AG04450 (cell line): ENCODE measurements at regions of chr7 and their contacts with region 1.

Region 1: DNA sequence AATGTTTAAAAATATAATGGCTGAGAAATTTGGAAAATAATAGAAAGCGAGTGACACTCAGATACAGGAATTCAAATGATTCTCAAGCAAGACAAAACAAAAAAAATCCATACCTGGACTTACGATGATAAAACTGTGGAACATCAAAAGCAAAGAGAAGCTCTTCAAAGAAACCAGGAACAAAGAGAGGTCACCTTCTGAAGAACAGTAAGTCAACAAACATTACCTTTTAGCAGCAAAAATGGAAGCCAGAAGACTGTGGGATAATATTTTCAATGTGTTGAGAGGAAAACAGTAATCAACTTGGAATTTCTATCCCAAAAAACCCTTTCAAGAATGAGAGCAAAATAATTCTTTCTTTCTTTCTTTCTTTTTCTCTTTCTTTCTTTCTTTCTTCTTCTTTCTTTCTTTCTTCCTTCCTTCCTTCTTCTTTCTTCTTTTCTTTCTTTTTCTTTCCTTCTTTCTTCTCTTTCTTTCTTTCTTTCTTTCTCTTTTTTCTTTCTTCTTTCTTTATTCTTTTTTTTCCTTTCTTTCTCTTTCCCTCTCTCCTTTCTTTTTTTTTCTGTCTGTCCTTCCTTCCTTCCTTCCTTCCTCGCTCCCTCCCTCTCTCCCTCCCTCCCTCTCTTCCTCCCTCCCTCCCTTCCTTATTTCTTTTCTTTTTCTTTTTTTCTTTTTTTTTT is 1.8 kb upstream of the CPA5 start:
- DNase-seq: no peak
- H3K4me3 ChIP-seq: no peak overlapping the region
- H3K27ac ChIP-seq: no peak overlapping the region
- H3K27me3 ChIP-seq: no peaks in the 10 kb centered on the region
- CTCF ChIP-seq: no peak

Region 2: DNA sequence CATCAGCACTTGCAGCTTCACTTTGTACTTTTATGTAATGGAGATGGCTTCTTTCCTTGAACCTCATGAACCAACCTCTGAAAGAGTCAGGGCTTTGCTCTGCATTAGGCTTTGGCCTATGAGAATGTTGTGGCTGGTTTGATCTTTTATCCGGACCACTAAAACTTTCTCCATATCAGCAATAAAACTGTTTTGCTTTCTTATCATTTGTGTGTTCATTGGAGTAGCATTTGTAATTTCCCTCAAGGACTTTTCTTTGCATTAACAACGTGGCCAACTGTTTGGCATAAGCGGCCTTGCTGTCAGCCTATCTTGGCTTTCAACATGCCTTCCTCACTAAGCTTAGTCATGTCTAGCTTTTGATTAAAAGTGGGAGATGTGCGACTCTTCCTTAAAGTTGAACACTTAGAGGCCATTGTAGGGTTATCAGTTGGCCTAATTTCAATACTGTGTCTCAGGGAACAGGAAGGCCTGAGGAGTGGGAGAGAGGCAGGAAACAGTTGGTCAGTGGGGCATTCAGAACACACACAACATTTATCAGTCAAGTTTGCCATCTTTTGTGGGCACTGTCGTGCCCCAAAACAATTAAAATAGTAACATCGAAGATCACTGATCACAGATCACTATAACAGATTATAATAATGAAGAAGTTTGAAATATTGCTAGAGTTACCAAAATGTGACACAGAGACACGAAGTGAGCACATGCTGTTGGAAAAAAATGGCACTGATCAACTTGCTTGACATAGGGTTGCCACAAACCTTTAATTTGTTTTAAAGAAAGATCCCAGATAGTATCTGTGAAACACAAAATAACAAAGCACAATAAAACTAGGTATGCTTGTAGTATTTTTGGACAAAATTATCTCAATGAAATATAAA is 666.6 kb before region 1 on chr7:
- CTCF ChIA-PET with region 1: no interaction called
- POLR2A ChIA-PET with region 1: no interaction called
- DNase-seq: no peak
- H3K4me3 ChIP-seq: no peak overlapping the region
- H3K27ac ChIP-seq: no peak overlapping the region
- H3K27me3 ChIP-seq: no peaks in the 10 kb centered on the region
- CTCF ChIP-seq: no peak

Region 3: GRCh38 chr7:130356121-130356875 is 13.5 kb after region 1 on chr7:
- CTCF ChIA-PET with region 1: no interaction called
- POLR2A ChIA-PET with region 1: no interaction called
- DNase-seq: peak; percentile 95
- H3K4me3 ChIP-seq: peak overlapping the region; percentile 18; the same call in 1 of the 2 replicates
- H3K27ac ChIP-seq: peak overlapping the region; percentile 100
- H3K27me3 ChIP-seq: no peaks in the 10 kb centered on the region
- CTCF ChIP-seq: no peak

Region 4: GRCh38 chr7:130369841-130370550 is 27.2 kb after region 1 on chr7:
- CTCF ChIA-PET with region 1: no interaction called
- POLR2A ChIA-PET with region 1: interaction called, 10 read pairs
- DNase-seq: no peak
- H3K4me3 ChIP-seq: no peak overlapping the region
- H3K27ac ChIP-seq: peak overlapping the region; percentile 31
- H3K27me3 ChIP-seq: no peaks in the 10 kb centered on the region
- CTCF ChIP-seq: no peak

Region 5: GRCh38 chr7:130444234-130444633 is 101.4 kb after region 1 on chr7:
- CTCF ChIA-PET with region 1: no interaction called
- POLR2A ChIA-PET with region 1: no interaction called
- DNase-seq: no peak
- H3K4me3 ChIP-seq: no peak overlapping the region
- H3K27ac ChIP-seq: no peak overlapping the region
- H3K27me3 ChIP-seq: no peaks in the 10 kb centered on the region
- CTCF ChIP-seq: no peak

Region 6: GRCh38 chr7:131443496-131443895 is 1100.7 kb after region 1 on chr7:
- CTCF ChIA-PET with region 1: no interaction called
- POLR2A ChIA-PET with region 1: no interaction called
- DNase-seq: no peak
- H3K4me3 ChIP-seq: no peak overlapping the region
- H3K27ac ChIP-seq: no peak overlapping the region
- H3K27me3 ChIP-seq: no peaks in the 10 kb centered on the region
- CTCF ChIP-seq: no peak